Activated T-helper 1 cell treated with anti-CD3 and anti-CD28 coated beads, Interleukin-12 subunit alpha, Interleukin-12 subunit beta, Interleukin-2, Interleukin-4 antibody, amounts not matched to agents 30 ng/mL and 10 ng/mL and 1 ng/mL, durations not matched to agents 14 hours and 24 hours and 36 hours (primary cell): ENCODE measurements at regions of chr3 and their contacts with region 1.

Region 1: GRCh38 chr3:39361252-39361927 is 21.8 kb upstream of the SLC25A38 start:
- DNase-seq: peak; percentile 71
- H3K4me3 Mint-ChIP-seq: peak overlapping the region; percentile 69
- H3K27ac Mint-ChIP-seq: peak overlapping the region; percentile 85
- H3K4me1 Mint-ChIP-seq: peaks cover 75% of the 10 kb centered on the region
- H3K27me3 Mint-ChIP-seq: peaks cover 10% of the 10 kb centered on the region

Region 2: DNA sequence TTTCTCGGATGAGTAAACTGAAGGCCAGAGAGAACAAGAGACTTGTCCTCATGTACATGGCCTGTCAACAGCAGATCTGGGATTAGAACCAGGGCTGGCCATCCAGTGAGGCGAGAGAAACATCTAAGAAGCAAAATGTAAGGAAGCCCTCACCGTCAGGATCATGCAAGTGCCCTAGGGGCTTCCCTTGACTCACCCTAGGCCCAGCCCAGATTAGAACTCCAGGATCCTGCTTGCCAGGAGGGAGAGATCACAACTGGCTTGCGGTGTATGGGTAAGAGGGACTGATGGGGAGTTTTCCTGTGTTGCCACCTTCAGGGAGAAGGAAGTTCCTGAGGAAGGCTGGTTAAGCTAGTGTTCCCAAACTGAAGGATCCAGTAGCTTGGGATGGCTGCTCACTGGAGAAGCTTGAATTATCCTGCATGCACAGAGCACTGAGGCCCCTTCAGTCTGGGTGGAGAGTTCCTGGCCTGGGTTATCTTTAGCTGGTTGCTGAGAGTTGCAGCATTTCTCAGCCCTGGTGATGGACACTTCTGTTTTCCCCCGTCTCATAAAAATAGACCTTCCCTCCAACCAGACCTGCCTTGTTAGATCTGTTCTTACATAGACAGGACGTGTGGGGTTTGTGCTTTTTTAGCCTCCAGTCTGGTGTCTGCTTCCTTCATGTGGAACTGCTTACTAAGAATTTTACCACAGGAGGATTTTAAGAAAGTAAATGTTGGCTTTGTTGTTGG is 140.8 kb before region 1 on chr3:
- intact Hi-C with region 1: loop called (anchors 5 kb)
- DNase-seq: peak; percentile 16
- H3K4me3 Mint-ChIP-seq: peak overlapping the region; percentile 43
- H3K27ac Mint-ChIP-seq: peak overlapping the region; percentile 25
- H3K4me1 Mint-ChIP-seq: peaks cover 61% of the 10 kb centered on the region
- H3K27me3 Mint-ChIP-seq: peaks cover 52% of the 10 kb centered on the region

Region 3: GRCh38 chr3:39327746-39328349 is 33.5 kb before region 1 on chr3:
- intact Hi-C with region 1: loop called (anchors 1 kb)
- DNase-seq: peak; percentile 28
- H3K4me3 Mint-ChIP-seq: peak overlapping the region; percentile 39
- H3K27ac Mint-ChIP-seq: peak overlapping the region; percentile 75
- H3K4me1 Mint-ChIP-seq: peaks cover 74% of the 10 kb centered on the region
- H3K27me3 Mint-ChIP-seq: no peaks in the 10 kb centered on the region

Region 4: GRCh38 chr3:39346785-39347585 is 14.4 kb before region 1 on chr3:
- intact Hi-C with region 1: loop called (anchors 1 kb)
- DNase-seq: no peak
- H3K4me3 Mint-ChIP-seq: peak overlapping the region; percentile 15
- H3K27ac Mint-ChIP-seq: peak overlapping the region; percentile 4
- H3K4me1 Mint-ChIP-seq: peaks cover 62% of the 10 kb centered on the region
- H3K27me3 Mint-ChIP-seq: no peaks in the 10 kb centered on the region

Region 5: DNA sequence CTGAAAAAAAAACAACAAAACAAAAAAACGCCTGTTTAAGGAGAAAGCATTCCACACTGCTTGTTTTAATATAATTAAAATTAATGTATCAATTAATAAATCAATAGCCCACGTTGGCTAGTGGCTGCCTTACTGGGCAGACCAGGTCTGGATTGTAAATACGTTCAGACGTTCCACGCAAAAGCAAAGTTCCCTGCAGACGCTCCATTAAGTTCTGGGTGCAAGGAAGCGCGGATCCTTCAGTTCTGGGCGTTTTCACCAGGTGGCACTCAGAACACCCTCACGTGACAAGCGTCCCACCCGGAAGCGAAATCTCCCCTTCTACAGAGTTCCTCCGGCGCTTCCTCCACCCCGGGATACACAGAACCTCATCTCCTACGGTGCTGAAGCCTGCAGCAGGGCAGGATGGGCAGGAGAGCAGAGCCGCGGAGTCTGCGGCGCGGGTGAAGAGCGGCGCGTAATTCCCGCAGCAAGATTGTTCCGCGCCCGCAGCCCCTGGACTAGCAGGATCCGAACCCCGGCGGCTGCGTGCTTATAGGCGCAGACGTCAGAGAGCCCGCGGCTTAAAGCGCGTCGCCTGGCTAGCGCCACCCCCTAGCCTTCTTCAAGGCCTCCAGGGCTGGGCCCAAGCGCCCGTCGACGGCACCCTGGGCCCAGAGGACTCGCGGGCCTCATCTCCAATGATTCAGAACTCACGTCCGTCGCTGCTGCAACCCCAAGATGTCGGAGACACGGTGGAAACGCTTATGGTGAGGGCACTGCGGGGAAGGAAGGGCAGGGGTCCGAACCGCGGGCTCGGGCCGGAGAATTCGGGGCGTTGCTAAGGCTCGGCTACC is 21.9 kb after region 1 on chr3 and contains the start of gene SLC25A38:
- intact Hi-C with region 1: loop called (anchors 2 kb)
- DNase-seq: peak; percentile 74
- H3K4me3 Mint-ChIP-seq: peak within 1 kb of the TSS; percentile 94
- H3K27ac Mint-ChIP-seq: peak within 1 kb of the TSS; percentile 97
- H3K4me1 Mint-ChIP-seq: peaks cover 34% of the 10 kb centered on the region
- H3K27me3 Mint-ChIP-seq: no peaks in the 10 kb centered on the region
- total RNA-seq, gene SLC25A38: 40.0 and 43.1 TPM in 2 replicates

Region 6: GRCh38 chr3:39665441-39665840 is 304.1 kb after region 1 on chr3:
- intact Hi-C with region 1: no loop called
- DNase-seq: no peak
- H3K4me3 Mint-ChIP-seq: no peak overlapping the region
- H3K27ac Mint-ChIP-seq: no peak overlapping the region
- H3K4me1 Mint-ChIP-seq: no peaks in the 10 kb centered on the region
- H3K27me3 Mint-ChIP-seq: peaks cover 8% of the 10 kb centered on the region